ENCODE measurements at regions of chr12 and their contacts with region 1.

Region 1: DNA sequence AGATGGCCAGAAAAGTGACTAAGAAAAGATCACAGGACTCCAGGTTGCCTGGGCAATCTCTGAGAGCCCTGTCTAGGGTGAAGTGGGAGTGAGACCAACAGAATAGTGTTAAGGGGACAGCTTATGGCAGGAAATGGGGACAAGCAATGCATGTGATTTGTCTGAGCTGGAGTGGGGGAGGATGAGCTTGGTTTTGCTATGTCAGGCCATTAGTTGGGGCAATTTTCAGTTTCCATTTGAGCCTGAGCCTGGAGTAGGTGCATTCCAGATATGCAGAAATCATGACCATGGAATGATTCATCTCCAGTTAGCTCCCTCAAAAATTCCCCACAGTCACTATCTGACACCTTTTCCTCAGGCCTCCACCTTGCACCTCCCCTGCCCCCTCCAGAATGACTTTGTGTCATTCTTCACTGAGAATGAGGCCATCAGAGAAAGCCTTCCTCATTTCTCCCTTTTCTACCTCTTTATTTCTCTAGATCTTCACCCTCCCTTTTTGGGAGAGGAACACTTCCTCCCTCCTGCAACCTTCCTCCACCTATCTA is 150.9 kb upstream of the PLEKHG7 start:
- DNase-seq: no peak
- H3K4me3 Mint-ChIP-seq: no peak overlapping the region
- H3K27ac Mint-ChIP-seq: no peak overlapping the region
- H3K4me1 Mint-ChIP-seq: peaks cover 31% of the 10 kb centered on the region
- H3K27me3 Mint-ChIP-seq: no peaks in the 10 kb centered on the region

Region 2: GRCh38 chr12:92539113-92539749 is 12.7 kb before region 1 on chr12:
- intact Hi-C with region 1: loop called (anchors 1 kb)
- DNase-seq: no peak
- H3K4me3 Mint-ChIP-seq: peak overlapping the region; percentile 74
- H3K27ac Mint-ChIP-seq: peak overlapping the region; percentile 97
- H3K4me1 Mint-ChIP-seq: peaks cover 81% of the 10 kb centered on the region
- H3K27me3 Mint-ChIP-seq: no peaks in the 10 kb centered on the region

Measured in activated T-helper 1 cell treated with anti-CD3 and anti-CD28 coated beads, Interleukin-12 subunit alpha, Interleukin-12 subunit beta, Interleukin-2, Interleukin-4 antibody, amounts not matched to agents 30 ng/mL and 10 ng/mL and 1 ng/mL, durations not matched to agents 14 hours and 24 hours and 36 hours (primary cell).